ENCODE measurements at regions of chr19 and their contacts with region 1.

Region 1: DNA sequence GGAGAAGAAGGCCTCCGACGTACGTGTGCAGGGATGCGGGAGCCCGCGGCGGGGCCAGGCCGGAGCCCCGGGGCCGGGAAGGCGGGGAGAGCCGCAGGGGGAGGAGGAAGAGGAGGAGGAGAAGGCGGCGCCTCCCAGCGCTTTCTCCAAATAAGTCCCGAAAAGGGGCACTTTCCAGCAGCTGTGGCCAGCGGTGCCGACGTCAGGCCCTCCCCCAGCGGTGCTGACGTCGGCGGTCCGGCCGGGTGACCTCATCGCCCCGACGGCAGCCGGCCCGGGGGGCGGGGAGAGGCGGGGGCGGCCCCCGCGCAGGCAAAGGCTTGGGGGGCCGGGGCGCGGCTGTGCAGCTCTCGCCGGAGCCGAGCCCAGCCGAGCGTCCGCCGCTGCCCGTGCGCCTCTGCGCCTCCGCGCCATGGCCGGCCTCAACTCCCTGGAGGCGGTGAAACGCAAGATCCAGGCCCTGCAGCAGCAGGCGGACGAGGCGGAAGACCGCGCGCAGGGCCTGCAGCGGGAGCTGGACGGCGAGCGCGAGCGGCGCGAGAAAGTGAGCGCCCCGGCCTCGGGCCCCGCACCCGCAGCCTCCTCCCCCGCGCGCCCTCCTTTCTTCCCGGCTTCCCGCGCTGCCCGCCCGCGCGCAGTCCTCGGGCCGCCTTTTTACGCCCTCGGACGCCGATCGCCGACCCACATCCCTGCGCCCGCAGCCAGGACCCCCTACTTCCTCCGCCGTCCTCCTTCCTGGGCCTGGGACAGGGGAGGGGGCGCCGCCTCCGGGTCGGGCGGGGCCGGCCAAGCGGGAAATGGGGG is at the start of gene TPM4:
- DNase-seq: peak; percentile 46 to 94 (median 74)
- ATAC-seq: peak; percentile 26
- H3K4me3 ChIP-seq: peak within 1 kb of the TSS; percentile 87
- H3K4me3 Mint-ChIP-seq: peak within 1 kb of the TSS; percentile 85
- H3K27ac ChIP-seq: peak within 1 kb of the TSS; percentile 72 to 83
- H3K27ac Mint-ChIP-seq: peak within 1 kb of the TSS; percentile 94
- H3K4me1 ChIP-seq: peaks cover 83% of the 10 kb centered on the region
- H3K4me1 Mint-ChIP-seq: peaks cover 73% of the 10 kb centered on the region
- H3K27me3 ChIP-seq: no peaks in the 10 kb centered on the region
- H3K27me3 Mint-ChIP-seq: no peaks in the 10 kb centered on the region
- CTCF ChIP-seq: no peak
- total RNA-seq, gene TPM4: 182 to 185 TPM

Region 2: GRCh38 chr19:15836595-15837337 is 239.6 kb before region 1 on chr19:
- CTCF ChIA-PET with region 1: no interaction called
- POLR2A ChIA-PET with region 1: interaction called, 8 read pairs
- intact Hi-C with region 1: loop called (anchors 2 to 10 kb)
- DNase-seq: peak; percentile 86 to 98 (median 95)
- ATAC-seq: peak; percentile 86
- H3K4me3 ChIP-seq: peak overlapping the region; percentile 96
- H3K4me3 Mint-ChIP-seq: peak overlapping the region; percentile 96
- H3K27ac ChIP-seq: peak overlapping the region; percentile 97 to 99
- H3K27ac Mint-ChIP-seq: peak overlapping the region; percentile 92
- H3K4me1 ChIP-seq: peaks cover 20% of the 10 kb centered on the region
- H3K4me1 Mint-ChIP-seq: peaks cover 18% of the 10 kb centered on the region
- H3K27me3 ChIP-seq: no peaks in the 10 kb centered on the region
- H3K27me3 Mint-ChIP-seq: no peaks in the 10 kb centered on the region
- CTCF ChIP-seq: no peak

Region 3: DNA sequence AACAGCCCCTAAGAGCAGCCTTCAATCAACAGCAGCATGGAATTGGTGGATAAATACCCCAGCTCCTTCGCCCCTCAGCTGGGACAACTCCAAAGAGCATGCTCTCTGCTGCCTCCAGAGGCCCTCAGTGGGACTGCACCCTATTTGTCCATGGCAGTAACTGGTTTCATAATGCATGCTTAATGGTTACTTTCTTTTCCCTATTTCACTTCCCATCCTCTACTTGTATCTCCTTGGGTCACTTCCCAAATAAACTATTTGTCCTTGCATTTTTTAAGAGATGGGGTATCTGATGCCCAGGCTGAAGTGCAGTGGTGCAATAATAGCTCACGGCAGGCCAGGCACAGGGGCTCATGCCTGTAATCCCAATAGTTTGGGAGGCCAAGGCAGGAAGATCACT is 13.6 kb before region 1 on chr19:
- CTCF ChIA-PET with region 1: interaction called, 24 read pairs
- POLR2A ChIA-PET with region 1: interaction called, 8 read pairs
- intact Hi-C with region 1: loop called in 1 of 2 experiments (anchors 2 kb)
- DNase-seq: peak; percentile 58 to 84 (median 66)
- ATAC-seq: peak; percentile 91
- H3K4me3 ChIP-seq: no peak overlapping the region
- H3K4me3 Mint-ChIP-seq: no peak overlapping the region
- H3K27ac ChIP-seq: no peak overlapping the region
- H3K27ac Mint-ChIP-seq: no peak overlapping the region
- H3K4me1 ChIP-seq: peaks cover 24% of the 10 kb centered on the region
- H3K4me1 Mint-ChIP-seq: peaks cover 18% of the 10 kb centered on the region
- H3K27me3 ChIP-seq: no peaks in the 10 kb centered on the region
- H3K27me3 Mint-ChIP-seq: no peaks in the 10 kb centered on the region
- CTCF ChIP-seq: peak; percentile 90

Region 4: GRCh38 chr19:16088351-16089009 is 12.1 kb after region 1 on chr19:
- CTCF ChIA-PET with region 1: interaction called, 38 read pairs
- POLR2A ChIA-PET with region 1: interaction called, 192 read pairs
- intact Hi-C with region 1: loop called (anchors 1 to 2 kb)
- DNase-seq: no peak
- ATAC-seq: no peak
- H3K4me3 ChIP-seq: no peak overlapping the region
- H3K4me3 Mint-ChIP-seq: no peak overlapping the region
- H3K27ac ChIP-seq: no peak overlapping the region
- H3K27ac Mint-ChIP-seq: peak overlapping the region; percentile 64
- H3K4me1 ChIP-seq: peaks cover 45% of the 10 kb centered on the region
- H3K4me1 Mint-ChIP-seq: peaks cover 46% of the 10 kb centered on the region
- H3K27me3 ChIP-seq: no peaks in the 10 kb centered on the region
- H3K27me3 Mint-ChIP-seq: no peaks in the 10 kb centered on the region
- CTCF ChIP-seq: no peak

Region 5: GRCh38 chr19:16095071-16095571 is 18.8 kb after region 1 on chr19:
- CTCF ChIA-PET with region 1: interaction called, 3 read pairs
- POLR2A ChIA-PET with region 1: interaction called, 192 read pairs
- intact Hi-C with region 1: loop called in 1 of 2 experiments (anchors 2 kb)
- DNase-seq: no peak
- ATAC-seq: peak; percentile 66
- H3K4me3 ChIP-seq: no peak overlapping the region
- H3K4me3 Mint-ChIP-seq: peak overlapping the region; percentile 64
- H3K27ac ChIP-seq: peak overlapping the region in 1 of 2 donors; percentile 41
- H3K27ac Mint-ChIP-seq: peak overlapping the region; percentile 80
- H3K4me1 ChIP-seq: peaks cover 9% of the 10 kb centered on the region
- H3K4me1 Mint-ChIP-seq: peaks cover 32% of the 10 kb centered on the region
- H3K27me3 ChIP-seq: no peaks in the 10 kb centered on the region
- H3K27me3 Mint-ChIP-seq: no peaks in the 10 kb centered on the region
- CTCF ChIP-seq: no peak

Region 6: DNA sequence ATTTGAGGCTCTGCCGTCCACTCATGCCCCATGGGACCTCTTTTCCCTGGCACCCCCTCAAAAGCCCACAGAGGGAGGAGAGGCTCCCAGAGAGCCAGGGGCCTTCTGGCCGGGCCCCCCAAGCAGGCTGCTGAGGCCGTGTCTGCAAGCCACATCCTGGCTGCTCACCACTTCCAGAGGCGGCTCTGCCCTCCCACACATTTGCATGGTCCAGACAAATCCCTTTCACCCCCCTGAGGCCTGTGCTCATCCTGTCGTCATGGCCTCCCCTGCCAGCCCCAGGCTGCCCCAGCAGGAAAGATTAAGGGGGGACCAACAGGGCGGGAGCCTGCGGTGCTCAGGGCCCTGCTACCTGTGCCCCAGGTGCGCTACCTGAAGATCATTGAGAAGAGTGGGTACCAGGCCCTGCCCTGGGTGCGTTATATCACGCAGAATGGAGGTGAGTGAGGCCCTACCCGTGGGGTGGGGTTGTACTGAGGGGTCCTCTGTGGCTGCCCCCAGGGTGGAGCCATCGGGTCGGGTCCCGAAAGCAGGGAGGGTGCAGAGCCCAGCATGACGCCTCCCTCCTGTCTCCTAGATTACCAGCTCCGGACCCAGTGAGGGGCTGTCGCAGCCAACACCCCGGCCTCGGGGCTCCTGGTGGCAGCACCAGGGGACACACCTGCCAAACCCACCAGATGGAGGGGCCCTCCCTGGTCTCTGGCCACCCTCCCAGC is 157.6 kb after region 1 on chr19:
- CTCF ChIA-PET with region 1: no interaction called
- POLR2A ChIA-PET with region 1: no interaction called
- intact Hi-C with region 1: no loop called
- DNase-seq: peak in 1 of 14 experiments; percentile 31
- ATAC-seq: no peak
- H3K4me3 ChIP-seq: no peak overlapping the region
- H3K4me3 Mint-ChIP-seq: no peak overlapping the region
- H3K27ac ChIP-seq: peak overlapping the region in 1 of 2 donors; percentile 21
- H3K27ac Mint-ChIP-seq: no peak overlapping the region
- H3K4me1 ChIP-seq: peaks cover 12% of the 10 kb centered on the region
- H3K4me1 Mint-ChIP-seq: peaks cover 28% of the 10 kb centered on the region
- H3K27me3 ChIP-seq: no peaks in the 10 kb centered on the region
- H3K27me3 Mint-ChIP-seq: no peaks in the 10 kb centered on the region
- CTCF ChIP-seq: no peak

Measured in CD4-positive, alpha-beta T cell (primary cell).